ENCODE measurements at regions of chr9 and their contacts with region 1.

Region 1: DNA sequence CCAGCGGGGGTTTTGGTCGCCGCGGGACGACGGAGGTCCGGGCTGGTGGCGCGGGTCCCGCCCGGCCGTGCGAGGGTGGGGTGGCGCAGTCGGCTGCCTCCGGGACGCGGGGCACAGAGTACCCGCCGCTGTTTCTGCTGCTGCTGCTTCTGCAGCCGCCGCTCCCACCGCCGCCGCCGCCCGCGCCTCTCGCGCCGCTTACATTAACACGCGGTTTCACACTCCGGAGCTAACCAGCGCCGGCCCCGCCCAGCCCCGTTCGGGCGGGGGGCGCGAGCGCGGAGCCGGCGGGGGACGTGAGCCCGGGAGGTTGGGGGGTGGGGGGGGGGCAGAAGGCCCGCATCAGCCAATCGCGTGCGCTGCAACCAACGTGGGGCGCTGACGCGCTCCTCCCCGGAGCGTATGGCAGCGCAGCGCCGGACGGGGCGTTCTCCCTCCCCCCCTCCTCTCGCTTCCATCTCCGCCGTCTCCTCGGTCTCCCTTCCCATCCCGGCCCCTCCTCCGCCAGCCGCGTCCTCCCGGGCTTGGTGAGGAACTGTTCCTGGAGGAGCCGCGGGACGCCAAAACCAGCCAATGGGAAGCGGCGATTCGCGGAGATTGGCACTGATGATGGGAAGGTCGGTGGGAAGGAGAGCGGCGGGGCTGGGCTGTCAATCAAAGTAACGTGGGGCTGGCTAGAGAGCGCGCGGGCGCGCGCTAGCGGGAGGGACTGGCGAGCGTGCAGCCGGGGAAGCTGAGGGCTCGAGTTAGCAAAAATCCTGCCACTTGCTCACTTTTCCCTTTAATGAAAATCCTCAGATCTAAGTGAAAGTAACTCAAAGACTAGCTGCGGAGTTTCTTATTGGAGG is at the start of gene TLE1:
- DNase-seq: peak; percentile 99 to 100
- ATAC-seq: peak; percentile 71 to 77
- H3K4me3 ChIP-seq: peak within 1 kb of the TSS; percentile 74 to 92 (median 86)
- H3K27ac ChIP-seq: peak within 1 kb of the TSS; percentile 94 to 98 (median 96)
- H3K4me1 ChIP-seq: peaks cover 23 to 28% of the 10 kb centered on the region in 2 donors
- H3K27me3 ChIP-seq: no peaks in the 10 kb centered on the region
- CTCF ChIP-seq: no peak
- POLR2A ChIP-seq: peak; percentile 97 to 98
- total RNA-seq, gene TLE1: 32.0 to 159 (median 55.4) TPM

Region 2: GRCh38 chr9:80874276-80874675 is 815.3 kb before region 1 on chr9:
- in situ Hi-C with region 1: no loop called
- intact Hi-C with region 1: no loop called
- DNase-seq: no peak
- ATAC-seq: no peak
- H3K4me3 ChIP-seq: no peak overlapping the region
- H3K27ac ChIP-seq: no peak overlapping the region
- H3K4me1 ChIP-seq: no peaks in the 10 kb centered on the region
- H3K27me3 ChIP-seq: no peaks in the 10 kb centered on the region
- CTCF ChIP-seq: no peak
- POLR2A ChIP-seq: no peak

Region 3: DNA sequence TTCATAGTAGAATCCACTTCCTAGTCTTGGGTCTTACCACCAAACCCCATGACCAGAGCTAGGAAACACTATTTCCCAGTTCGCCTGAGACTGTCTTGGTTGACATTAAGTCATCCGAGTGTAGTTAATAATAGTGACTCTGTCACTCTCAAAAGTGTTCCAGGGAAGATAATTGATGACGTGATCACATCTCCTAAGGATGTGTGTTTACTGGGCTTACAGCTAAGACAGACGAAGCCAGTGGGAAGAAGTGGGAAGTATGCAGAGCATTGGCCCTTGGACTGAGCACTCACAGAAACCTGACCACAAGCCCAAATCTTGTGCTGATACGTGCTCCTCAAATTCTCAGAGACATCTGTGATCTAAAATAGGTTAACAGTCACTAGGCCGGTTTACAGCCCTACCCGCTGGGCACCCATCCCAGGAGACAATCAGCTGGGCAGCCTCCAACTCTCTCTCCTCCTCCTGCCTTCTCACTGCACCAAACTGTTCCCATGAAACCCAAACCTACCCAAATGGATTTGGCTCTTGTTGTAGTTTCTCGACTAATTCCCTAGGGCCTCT is 316.9 kb before region 1 on chr9:
- in situ Hi-C with region 1: no loop called
- intact Hi-C with region 1: loop called (anchors 2 kb)
- DNase-seq: peak; percentile 65 to 68
- ATAC-seq: peak; percentile 83 to 87
- H3K4me3 ChIP-seq: no peak overlapping the region
- H3K27ac ChIP-seq: peak overlapping the region; percentile 65 to 76 (median 69)
- H3K4me1 ChIP-seq: peaks cover 18 to 31% of the 10 kb centered on the region in 2 donors
- H3K27me3 ChIP-seq: no peaks in the 10 kb centered on the region
- CTCF ChIP-seq: no peak
- POLR2A ChIP-seq: no peak

Region 4: DNA sequence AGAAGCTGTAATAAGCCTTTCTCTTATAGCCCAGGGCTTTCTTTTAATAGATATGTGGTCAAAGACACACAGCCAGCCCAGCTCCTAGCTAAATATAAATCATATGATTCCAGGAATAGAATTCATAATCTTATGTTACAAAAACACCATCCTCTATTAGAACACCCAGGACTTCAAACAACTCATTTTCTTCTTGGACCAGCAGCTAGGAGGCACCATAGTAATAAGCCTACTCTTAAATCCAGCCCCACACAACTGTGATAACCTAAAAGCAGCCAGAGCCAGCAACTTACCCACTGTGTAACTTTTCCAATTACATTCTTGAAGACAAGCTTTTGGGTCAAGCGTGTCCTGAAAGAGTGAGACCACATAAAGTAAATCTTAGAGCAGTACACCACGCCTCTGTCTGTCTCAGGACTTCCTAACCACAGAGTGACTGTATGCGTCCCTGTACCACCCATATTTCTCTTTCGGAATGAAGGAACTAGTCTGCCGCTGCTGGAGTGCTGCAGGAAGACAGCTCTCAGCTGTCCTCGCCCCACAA is 224.0 kb before region 1 on chr9:
- in situ Hi-C with region 1: no loop called
- intact Hi-C with region 1: loop called (anchors 2 kb)
- DNase-seq: peak; percentile 40 to 45
- ATAC-seq: peak; percentile 92 to 97
- H3K4me3 ChIP-seq: peak overlapping the region; percentile 24 to 37 (median 35)
- H3K27ac ChIP-seq: peak overlapping the region; percentile 74 to 91 (median 86)
- H3K4me1 ChIP-seq: peaks cover 16 to 26% of the 10 kb centered on the region in 2 donors
- H3K27me3 ChIP-seq: no peaks in the 10 kb centered on the region
- CTCF ChIP-seq: peak; percentile 16 to 52 (median 46)
- POLR2A ChIP-seq: peak; percentile 33 to 77

Region 5: GRCh38 chr9:81599832-81600231 is 89.7 kb before region 1 on chr9:
- in situ Hi-C with region 1: no loop called
- intact Hi-C with region 1: loop called (anchors 1 kb)
- DNase-seq: no peak
- ATAC-seq: no peak
- H3K4me3 ChIP-seq: no peak overlapping the region
- H3K27ac ChIP-seq: peak overlapping the region; percentile 81 to 93 (median 90)
- H3K4me1 ChIP-seq: peaks cover 62 to 63% of the 10 kb centered on the region in 2 donors
- H3K27me3 ChIP-seq: no peaks in the 10 kb centered on the region
- CTCF ChIP-seq: no peak
- POLR2A ChIP-seq: no peak

Region 6: GRCh38 chr9:81754245-81754644 is 64.7 kb after region 1 on chr9:
- in situ Hi-C with region 1: no loop called
- intact Hi-C with region 1: no loop called
- DNase-seq: no peak
- ATAC-seq: no peak
- H3K4me3 ChIP-seq: no peak overlapping the region
- H3K27ac ChIP-seq: no peak overlapping the region
- H3K4me1 ChIP-seq: no peaks in the 10 kb centered on the region
- H3K27me3 ChIP-seq: no peaks in the 10 kb centered on the region
- CTCF ChIP-seq: no peak
- POLR2A ChIP-seq: no peak

Region 7: GRCh38 chr9:81848472-81848871 is 158.9 kb after region 1 on chr9:
- in situ Hi-C with region 1: no loop called
- intact Hi-C with region 1: loop called (anchors 5 kb)
- DNase-seq: no peak
- ATAC-seq: no peak
- H3K4me3 ChIP-seq: no peak overlapping the region
- H3K27ac ChIP-seq: no peak overlapping the region
- H3K4me1 ChIP-seq: peaks cover 12 to 22% of the 10 kb centered on the region in 2 donors
- H3K27me3 ChIP-seq: no peaks in the 10 kb centered on the region
- CTCF ChIP-seq: peak in 2 of 5 experiments; percentile 31 to 42
- POLR2A ChIP-seq: no peak